K562 (cell line): ENCODE measurements at regions of chr1 and their contacts with region 1.

Region 1: GRCh38 chr1:9629445-9630201 is 21.9 kb upstream of the PIK3CD start:
- DNase-seq: peak in 1 of 4 experiments; percentile 38
- ATAC-seq: peak; percentile 14
- H3K4me3 ChIP-seq: no peak overlapping the region
- H3K27ac ChIP-seq: no peak overlapping the region; the same call in 2 of the 3 replicates
- H3K4me1 ChIP-seq: peaks cover 17 to 38% of the 10 kb centered on the region in 2 experiments; a peak in 4 of 5 replicates
- H3K27me3 ChIP-seq: no peaks in the 10 kb centered on the region; a peak in 1 of 5 replicates
- CTCF ChIP-seq: no peak
- EP300 ChIP-seq: 0 out of 2 replicates have a peak, but pooled peaks have one; percentile 22
- POLR2A ChIP-seq: no peak
- RAD21 ChIP-seq: no peak

Region 2: GRCh38 chr1:9058465-9058864 is 571.2 kb before region 1 on chr1:
- CTCF ChIA-PET with region 1: no interaction called
- POLR2A ChIA-PET with region 1: no interaction called
- in situ Hi-C with region 1: no loop called
- intact Hi-C with region 1: no loop called
- DNase-seq: peak in 2 of 4 experiments; percentile 3
- ATAC-seq: no peak; the same call in 2 of the 3 replicates
- H3K4me3 ChIP-seq: no peak overlapping the region
- H3K27ac ChIP-seq: no peak overlapping the region
- H3K4me1 ChIP-seq: no peaks in the 10 kb centered on the region
- H3K27me3 ChIP-seq: peaks cover 12 to 35% of the 10 kb centered on the region in 2 experiments
- CTCF ChIP-seq: no peak
- EP300 ChIP-seq: no peak
- POLR2A ChIP-seq: no peak
- RAD21 ChIP-seq: no peak

Region 3: DNA sequence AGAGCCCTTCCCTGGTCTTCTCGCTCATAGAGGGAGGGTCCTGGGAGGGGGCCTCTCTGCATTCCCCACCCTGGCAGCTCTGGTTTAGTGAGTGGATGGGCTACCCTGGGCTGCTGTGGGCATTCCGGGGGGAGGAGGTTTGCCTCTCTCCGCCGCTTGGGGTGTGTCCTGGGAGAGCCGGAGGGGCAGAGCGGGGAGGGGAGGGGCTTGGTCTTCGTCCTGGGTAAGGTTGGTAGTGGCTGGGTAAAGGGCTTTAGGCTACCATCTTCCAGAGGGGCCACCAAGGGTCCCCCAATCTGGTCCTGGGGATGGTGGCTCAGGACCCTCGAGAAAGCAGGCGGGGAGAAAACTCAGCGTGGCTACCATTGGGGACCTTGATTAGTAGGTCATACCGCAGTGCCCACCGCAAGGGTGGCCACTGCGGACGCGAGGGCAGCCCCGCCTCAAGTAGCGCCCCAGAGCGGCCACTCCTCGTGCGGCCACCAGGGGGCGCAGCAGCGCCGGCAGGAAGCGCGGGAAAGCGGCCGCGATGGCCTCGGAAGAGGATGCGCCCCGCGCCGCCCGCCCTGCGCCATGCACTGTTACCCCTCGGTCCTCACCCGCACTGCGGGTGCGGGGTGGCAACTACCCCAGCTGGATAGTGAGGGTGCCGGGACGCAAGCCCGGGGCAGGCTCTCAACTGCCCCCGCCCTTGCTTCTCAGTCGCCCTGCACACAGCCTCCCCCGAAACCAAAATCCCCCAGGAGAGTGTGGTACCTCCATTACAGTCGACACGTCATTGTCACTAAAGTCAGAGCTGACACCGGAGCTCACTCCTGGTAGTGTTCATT is 134.5 kb before region 1 on chr1:
- CTCF ChIA-PET with region 1: no interaction called
- POLR2A ChIA-PET with region 1: no interaction called
- in situ Hi-C with region 1: no loop called
- intact Hi-C with region 1: no loop called
- DNase-seq: peak; percentile 79 to 90 (median 86)
- ATAC-seq: peak; percentile 95
- H3K4me3 ChIP-seq: 0 out of 2 replicates have a peak overlapping the region, but pooled peaks have one; percentile 24
- H3K27ac ChIP-seq: no peak overlapping the region
- H3K4me1 ChIP-seq: peaks cover 4 to 8% of the 10 kb centered on the region in 2 experiments; a peak in 3 of 5 replicates
- H3K27me3 ChIP-seq: peaks cover 8 to 54% of the 10 kb centered on the region in 2 experiments; a peak in 4 of 5 replicates
- CTCF ChIP-seq: peak; percentile 96 to 98 (median 97)
- EP300 ChIP-seq: no peak
- POLR2A ChIP-seq: no peak
- RAD21 ChIP-seq: peak; percentile 79 to 96

Region 4: DNA sequence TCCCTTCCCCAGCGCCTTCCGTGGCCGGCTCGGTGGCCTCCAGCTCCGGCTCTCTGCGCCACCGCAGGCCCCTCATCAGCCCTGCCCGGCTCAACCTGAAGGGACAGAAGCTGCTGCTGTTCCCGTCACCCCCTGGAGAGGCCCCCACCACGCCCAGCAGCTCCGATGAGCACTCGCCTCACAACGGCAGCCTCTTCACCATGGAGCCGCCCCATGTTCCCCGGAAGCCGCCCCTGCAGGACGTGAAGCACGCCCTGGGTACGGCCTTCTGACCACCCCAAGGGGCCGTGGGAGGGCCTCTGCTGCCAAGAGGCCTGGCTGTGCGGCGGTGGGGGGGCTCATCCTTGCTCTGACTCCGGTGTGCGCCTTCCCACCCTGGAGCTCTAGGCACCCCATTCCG is 19.1 kb before region 1 on chr1:
- CTCF ChIA-PET with region 1: no interaction called
- POLR2A ChIA-PET with region 1: no interaction called
- in situ Hi-C with region 1: no loop called
- intact Hi-C with region 1: no loop called
- DNase-seq: no peak
- ATAC-seq: no peak
- H3K4me3 ChIP-seq: no peak overlapping the region
- H3K27ac ChIP-seq: no peak overlapping the region
- H3K4me1 ChIP-seq: peaks cover 0 to 23% of the 10 kb centered on the region in 2 experiments; a peak in 2 of 5 replicates
- H3K27me3 ChIP-seq: no peaks in the 10 kb centered on the region
- CTCF ChIP-seq: no peak
- EP300 ChIP-seq: no peak
- POLR2A ChIP-seq: no peak
- RAD21 ChIP-seq: no peak

Region 5: DNA sequence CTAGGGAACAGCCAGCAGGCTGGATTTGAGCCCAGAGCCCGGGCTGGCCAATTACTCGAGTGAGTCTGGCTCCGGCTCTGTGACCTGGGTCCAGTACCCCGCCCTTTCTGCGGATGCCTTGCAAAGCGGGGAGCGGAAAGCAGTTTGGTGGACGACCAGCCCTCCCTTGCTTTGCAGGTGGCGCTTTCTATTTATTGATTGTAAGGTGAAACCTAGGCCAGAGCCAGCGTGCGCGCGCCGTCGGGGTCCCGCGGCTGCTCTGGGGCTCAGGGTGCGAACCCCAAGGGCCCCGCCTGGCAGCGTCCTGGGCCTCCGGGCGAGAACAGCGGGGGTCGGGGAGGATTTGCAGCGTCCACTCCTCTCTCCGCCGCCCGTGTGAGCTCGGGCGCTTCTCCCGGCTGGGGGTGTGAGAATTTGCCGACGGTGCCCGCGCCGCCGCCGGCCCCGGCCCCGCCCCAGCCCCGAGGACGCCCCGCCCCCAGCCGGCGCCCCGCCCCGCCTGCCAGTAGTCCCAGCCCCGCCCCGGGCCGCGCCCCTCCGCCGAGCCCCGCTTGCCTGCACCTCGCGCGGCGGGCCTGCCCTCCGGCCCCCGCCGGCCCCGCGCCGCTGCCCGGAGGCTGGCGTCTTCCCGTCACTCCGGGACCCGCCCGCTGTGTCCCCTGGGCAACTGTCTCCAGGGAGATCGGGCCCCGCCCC is 59.5 kb after region 1 on chr1:
- CTCF ChIA-PET with region 1: interaction called, 10 read pairs
- POLR2A ChIA-PET with region 1: interaction called, 4 read pairs
- in situ Hi-C with region 1: no loop called
- intact Hi-C with region 1: loop called (anchors 5 kb)
- DNase-seq: peak; percentile 89 to 98 (median 96)
- ATAC-seq: peak; percentile 86
- H3K4me3 ChIP-seq: peak overlapping the region; percentile 51
- H3K27ac ChIP-seq: peak overlapping the region; percentile 43; the same call in 1 of the 3 replicates
- H3K4me1 ChIP-seq: peaks cover 31 to 39% of the 10 kb centered on the region in 2 experiments
- H3K27me3 ChIP-seq: no peaks in the 10 kb centered on the region
- CTCF ChIP-seq: no peak
- EP300 ChIP-seq: no peak
- POLR2A ChIP-seq: no peak
- RAD21 ChIP-seq: no peak

Region 6: GRCh38 chr1:9717193-9718005 is 87.8 kb after region 1 on chr1:
- CTCF ChIA-PET with region 1: interaction called, 20 read pairs
- POLR2A ChIA-PET with region 1: no interaction called
- in situ Hi-C with region 1: no loop called
- intact Hi-C with region 1: loop called (anchors 1 kb)
- DNase-seq: peak; percentile 88 to 98 (median 92)
- ATAC-seq: peak; percentile 81
- H3K4me3 ChIP-seq: peak overlapping the region; percentile 48
- H3K27ac ChIP-seq: peak overlapping the region; percentile 87
- H3K4me1 ChIP-seq: peaks cover 61 to 94% of the 10 kb centered on the region in 2 experiments
- H3K27me3 ChIP-seq: no peaks in the 10 kb centered on the region
- CTCF ChIP-seq: peak; percentile 45 to 49 (median 46)
- EP300 ChIP-seq: peak; percentile 77
- POLR2A ChIP-seq: peak; percentile 91
- RAD21 ChIP-seq: peak; percentile 29 to 37

Region 7: DNA sequence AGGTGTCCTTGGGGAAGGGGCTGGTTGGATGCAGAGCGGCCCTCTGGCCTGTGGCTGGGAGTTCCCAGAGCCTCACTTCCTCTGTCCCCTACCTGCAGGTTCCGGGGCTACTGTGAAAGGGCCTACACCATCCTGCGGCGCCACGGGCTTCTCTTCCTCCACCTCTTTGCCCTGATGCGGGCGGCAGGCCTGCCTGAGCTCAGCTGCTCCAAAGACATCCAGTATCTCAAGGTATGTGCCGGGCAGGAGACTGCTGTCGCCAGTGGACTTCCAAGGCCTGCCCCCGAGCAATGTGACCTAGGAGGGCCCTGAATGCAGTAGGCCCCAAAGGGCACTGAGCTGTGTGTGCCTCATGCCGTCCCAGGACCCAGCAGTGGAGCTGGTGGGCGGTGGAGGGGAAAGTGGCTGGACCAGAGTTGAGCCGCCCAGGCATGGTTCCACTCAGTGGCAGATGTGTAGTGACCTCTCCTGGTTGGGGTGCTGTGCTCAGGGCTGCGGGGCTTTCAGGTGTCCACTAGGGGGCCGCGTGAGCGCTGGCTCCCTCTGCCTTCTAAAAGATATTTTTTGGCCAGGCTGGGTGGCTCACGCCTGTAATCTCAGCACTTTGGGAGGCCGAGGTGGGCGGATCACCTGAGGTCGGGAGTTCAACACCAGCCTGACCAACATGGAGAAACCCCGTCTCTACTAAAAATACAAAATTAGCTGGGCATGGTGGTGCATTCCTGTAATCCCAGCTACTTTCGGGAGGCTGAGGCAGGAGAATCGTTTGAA is 95.3 kb after region 1 on chr1:
- CTCF ChIA-PET with region 1: interaction called, 66 read pairs
- POLR2A ChIA-PET with region 1: interaction called, 3 read pairs
- in situ Hi-C with region 1: no loop called
- intact Hi-C with region 1: loop called (anchors 1 kb)
- DNase-seq: peak; percentile 86 to 91 (median 88)
- ATAC-seq: peak; percentile 96
- H3K4me3 ChIP-seq: no peak overlapping the region
- H3K27ac ChIP-seq: no peak overlapping the region
- H3K4me1 ChIP-seq: peaks cover 7 to 43% of the 10 kb centered on the region in 2 experiments
- H3K27me3 ChIP-seq: no peaks in the 10 kb centered on the region
- CTCF ChIP-seq: peak; percentile 97 to 99 (median 99)
- EP300 ChIP-seq: no peak
- POLR2A ChIP-seq: no peak
- RAD21 ChIP-seq: peak; percentile 62 to 96

Region 8: DNA sequence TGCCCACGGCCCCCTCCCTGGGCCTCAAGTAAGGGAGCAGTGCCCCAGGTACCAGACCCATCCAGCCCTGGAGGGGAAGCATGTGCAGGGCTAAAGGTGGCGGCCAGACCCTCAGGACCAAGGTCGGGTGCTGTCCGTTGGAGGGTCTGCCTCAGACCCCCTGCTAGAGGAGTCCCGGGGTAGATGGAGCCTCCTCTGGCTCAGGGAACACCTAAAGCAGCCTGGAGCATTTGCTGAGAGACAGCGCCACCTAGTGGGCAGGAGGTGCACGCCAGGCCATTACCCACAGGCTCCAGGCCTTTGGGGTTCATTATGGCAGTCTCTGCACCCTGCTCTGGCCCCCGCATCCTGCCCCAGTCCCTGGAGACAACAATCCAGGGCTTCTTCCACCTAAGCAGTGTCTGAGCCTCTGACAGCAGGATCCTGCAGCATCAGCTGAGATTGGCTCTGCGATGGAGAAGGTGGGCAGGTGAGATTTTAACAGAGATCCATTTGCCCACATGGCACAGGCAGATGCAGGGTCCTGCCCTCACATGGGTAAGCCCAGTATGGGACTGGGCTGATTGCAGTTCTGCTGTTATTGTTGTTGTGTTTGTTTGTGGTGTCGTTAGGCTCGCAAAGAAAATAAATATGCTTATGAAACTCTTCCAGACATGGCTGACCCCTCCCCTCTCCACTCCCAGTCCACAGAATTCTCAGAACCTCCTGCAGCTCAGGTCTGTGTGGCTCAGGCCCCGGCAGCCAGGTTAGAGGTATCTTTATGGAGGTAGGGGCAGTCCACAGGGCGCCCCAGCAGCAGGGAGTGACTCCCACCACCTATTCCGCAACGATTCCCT is 238.0 kb after region 1 on chr1:
- CTCF ChIA-PET with region 1: interaction called, 59 read pairs
- POLR2A ChIA-PET with region 1: interaction called, 3 read pairs
- in situ Hi-C with region 1: loop called (anchors 5 kb)
- intact Hi-C with region 1: loop called (anchors 1 kb)
- DNase-seq: peak; percentile 84 to 92 (median 89)
- ATAC-seq: peak; percentile 99
- H3K4me3 ChIP-seq: no peak overlapping the region
- H3K27ac ChIP-seq: no peak overlapping the region
- H3K4me1 ChIP-seq: peaks cover 0 to 24% of the 10 kb centered on the region in 2 experiments; a peak in 2 of 5 replicates
- H3K27me3 ChIP-seq: no peaks in the 10 kb centered on the region
- CTCF ChIP-seq: peak; percentile 97 to 98 (median 98)
- EP300 ChIP-seq: no peak
- POLR2A ChIP-seq: no peak
- RAD21 ChIP-seq: peak; percentile 96 to 99

Region 9: DNA sequence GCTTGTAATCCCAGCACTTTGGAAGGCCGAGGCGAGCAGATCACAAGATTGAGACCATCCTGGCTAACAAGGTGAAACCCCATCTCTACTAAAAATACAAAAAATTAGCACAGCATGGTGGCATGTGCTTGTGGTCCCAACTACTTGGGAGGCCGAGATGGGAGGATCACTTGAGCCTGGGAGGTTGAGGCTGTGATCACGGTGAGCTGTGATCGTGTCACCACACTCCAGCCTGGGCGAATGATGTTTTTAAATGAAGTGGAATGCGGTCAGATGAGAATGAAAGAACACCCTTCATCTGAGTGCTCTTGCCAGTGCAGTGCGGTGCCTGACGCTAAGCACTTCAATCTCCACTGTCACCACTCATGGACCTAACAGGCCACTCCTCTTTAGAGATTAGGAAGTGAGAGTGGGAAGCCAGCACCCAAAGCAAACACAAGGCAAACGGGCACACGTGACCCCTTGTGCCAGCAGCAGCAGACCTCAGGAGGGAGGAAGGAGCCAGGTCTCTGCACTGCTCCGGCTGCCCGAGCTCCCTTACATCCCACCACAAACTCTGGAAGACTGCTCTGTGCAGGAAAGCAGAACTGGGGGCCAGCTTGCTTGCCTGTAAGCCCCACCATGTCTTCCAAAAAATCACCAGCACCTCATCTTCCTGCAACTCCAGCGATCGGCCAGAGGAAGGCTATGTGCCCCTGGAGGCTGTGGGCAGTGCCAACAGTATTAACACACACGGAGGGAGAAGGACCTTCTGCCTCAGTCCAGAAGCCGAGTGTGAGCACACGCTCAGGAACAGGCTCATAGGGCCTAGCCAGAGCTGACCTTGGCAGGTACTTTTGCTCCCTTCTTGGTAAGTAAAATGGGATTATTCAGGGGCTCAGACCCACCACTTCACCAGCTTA is 270.8 kb after region 1 on chr1:
- CTCF ChIA-PET with region 1: no interaction called
- POLR2A ChIA-PET with region 1: no interaction called
- in situ Hi-C with region 1: no loop called
- intact Hi-C with region 1: no loop called
- DNase-seq: no peak
- ATAC-seq: peak; percentile 48
- H3K4me3 ChIP-seq: no peak overlapping the region
- H3K27ac ChIP-seq: no peak overlapping the region
- H3K4me1 ChIP-seq: peaks cover 16 to 28% of the 10 kb centered on the region in 2 experiments; a peak in 4 of 5 replicates
- H3K27me3 ChIP-seq: no peaks in the 10 kb centered on the region
- CTCF ChIP-seq: no peak
- EP300 ChIP-seq: no peak
- POLR2A ChIP-seq: no peak
- RAD21 ChIP-seq: no peak